Gastrocnemius medialis (tissue), 4 donors: ENCODE measurements at regions of chr20 and their contacts with region 1.

Region 1: DNA sequence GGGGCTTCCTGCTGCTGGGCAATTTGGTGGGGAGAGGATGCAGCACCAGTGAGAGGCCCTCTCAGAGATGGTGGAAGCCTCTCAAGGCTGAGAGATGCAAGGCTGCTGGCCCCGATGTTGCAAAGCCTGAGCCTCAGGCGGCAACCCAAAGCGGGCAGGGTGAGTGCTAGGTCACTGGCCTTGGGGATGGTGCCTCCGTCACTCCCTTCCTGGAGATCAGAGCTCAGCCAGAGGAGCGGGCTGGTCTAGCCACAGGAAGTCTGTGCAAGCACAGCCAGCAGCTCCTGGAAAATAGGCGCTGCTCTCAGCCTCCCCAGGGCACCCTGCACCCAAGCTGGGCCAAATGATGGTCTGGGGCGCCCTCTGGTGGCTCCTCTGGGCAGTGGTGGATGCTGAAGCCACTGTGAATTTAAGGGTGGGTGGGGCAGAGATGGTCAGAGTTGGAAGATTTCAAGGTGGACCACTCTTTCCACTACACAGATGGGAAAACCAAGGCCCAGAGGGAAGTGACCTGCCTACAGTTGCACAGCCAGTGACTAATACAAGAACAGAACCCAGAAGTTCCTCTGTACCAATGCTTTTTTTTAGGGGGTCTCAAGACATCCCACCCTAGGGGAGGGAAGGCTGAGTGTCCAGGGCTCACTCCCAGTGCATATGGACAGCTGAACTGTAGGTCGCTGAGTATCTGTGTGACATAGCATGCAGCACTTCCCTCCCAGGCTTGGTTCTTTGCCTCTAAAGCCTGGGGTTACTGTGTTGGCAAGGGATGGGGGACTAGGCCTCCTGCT is 20.8 kb downstream of the C20orf203 start:
- DNase-seq: peak; percentile 46 to 61
- ATAC-seq: peak; percentile 78 to 82
- H3K4me3 ChIP-seq: no peak overlapping the region
- H3K27ac ChIP-seq: no peak overlapping the region
- H3K4me1 ChIP-seq: no peaks in the 10 kb centered on the region
- H3K27me3 ChIP-seq: no peaks in the 10 kb centered on the region
- CTCF ChIP-seq: peak; percentile 85 to 95 (median 92)
- POLR2A ChIP-seq: no peak

Region 2: DNA sequence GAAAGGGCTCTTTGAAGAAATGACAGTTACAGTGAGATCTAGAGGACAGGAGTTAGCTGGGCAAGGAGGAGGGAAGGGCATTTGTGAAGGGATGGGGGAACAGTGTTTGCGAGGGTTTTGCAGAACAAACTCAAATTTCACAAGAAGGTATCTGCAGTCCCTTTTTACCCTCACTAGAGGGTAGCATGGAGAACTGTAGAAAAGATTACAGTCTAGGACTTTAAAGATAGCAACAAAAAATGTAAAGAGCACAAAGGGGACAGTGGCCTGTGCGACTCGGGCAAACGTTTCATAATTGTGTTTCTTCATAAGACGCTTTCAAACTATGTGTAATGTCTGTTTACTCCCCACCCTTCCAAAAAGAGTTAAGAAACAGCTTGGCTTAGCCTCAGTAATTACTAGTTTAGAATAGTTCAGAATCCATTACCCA is 316.0 kb before region 1 on chr20:
- in situ Hi-C with region 1: no loop called
- intact Hi-C with region 1: loop called (anchors 10 kb)
- DNase-seq: no peak
- ATAC-seq: peak in 1 of 2 donors; percentile 33
- H3K4me3 ChIP-seq: no peak overlapping the region
- H3K27ac ChIP-seq: no peak overlapping the region
- H3K4me1 ChIP-seq: peaks cover 0 to 13% of the 10 kb centered on the region in 2 donors
- H3K27me3 ChIP-seq: no peaks in the 10 kb centered on the region
- CTCF ChIP-seq: peak in 4 of 5 experiments; percentile 12 to 53 (median 39)
- POLR2A ChIP-seq: no peak

Region 3: GRCh38 chr20:32521780-32522525 is 131.0 kb before region 1 on chr20:
- in situ Hi-C with region 1: loop called in 1 of 4 experiments (anchors 5 kb)
- intact Hi-C with region 1: loop called (anchors 1 kb)
- DNase-seq: peak in 1 of 2 donors; percentile 27
- ATAC-seq: peak in 1 of 2 donors; percentile 71
- H3K4me3 ChIP-seq: no peak overlapping the region
- H3K27ac ChIP-seq: no peak overlapping the region
- H3K4me1 ChIP-seq: peaks cover 0 to 3% of the 10 kb centered on the region in 2 donors
- H3K27me3 ChIP-seq: no peaks in the 10 kb centered on the region
- CTCF ChIP-seq: peak; percentile 46 to 85 (median 76)
- POLR2A ChIP-seq: no peak

Region 4: DNA sequence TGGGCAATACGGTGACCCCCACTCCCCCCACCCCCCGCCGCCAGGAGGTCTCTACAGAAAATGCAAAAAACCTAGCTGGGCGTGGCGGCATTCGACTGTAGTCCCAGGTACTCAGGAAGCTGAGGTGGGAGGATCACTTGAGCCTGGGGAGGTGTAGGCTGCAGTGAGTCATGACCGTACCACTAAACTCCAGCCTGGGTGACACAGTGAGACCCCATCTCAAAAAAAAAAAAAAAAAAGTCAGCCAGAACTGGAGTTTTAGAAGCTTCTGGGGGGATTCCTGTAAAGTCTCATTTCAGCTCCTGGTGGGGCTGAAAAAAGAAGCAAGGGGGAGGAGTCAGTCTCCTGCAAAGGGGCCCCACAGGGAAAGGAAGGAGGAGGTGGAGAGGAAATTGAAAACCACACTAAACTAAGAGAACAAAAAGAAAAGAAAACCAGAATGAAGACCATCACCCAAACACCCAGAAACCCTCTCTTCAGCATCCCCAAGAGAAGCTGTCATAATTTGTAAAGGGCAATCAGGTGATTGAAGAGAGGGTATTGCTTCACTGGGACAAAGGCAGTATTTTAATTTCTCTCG is 118.2 kb before region 1 on chr20:
- in situ Hi-C with region 1: loop called in 3 of 4 experiments (anchors 5 kb)
- intact Hi-C with region 1: no loop called
- DNase-seq: no peak
- ATAC-seq: no peak
- H3K4me3 ChIP-seq: no peak overlapping the region
- H3K27ac ChIP-seq: no peak overlapping the region
- H3K4me1 ChIP-seq: no peaks in the 10 kb centered on the region
- H3K27me3 ChIP-seq: no peaks in the 10 kb centered on the region
- CTCF ChIP-seq: no peak
- POLR2A ChIP-seq: no peak

Region 5: GRCh38 chr20:32539817-32540675 is 112.9 kb before region 1 on chr20:
- in situ Hi-C with region 1: loop called in 1 of 4 experiments (anchors 10 kb)
- intact Hi-C with region 1: no loop called
- DNase-seq: no peak
- ATAC-seq: no peak
- H3K4me3 ChIP-seq: no peak overlapping the region
- H3K27ac ChIP-seq: no peak overlapping the region
- H3K4me1 ChIP-seq: no peaks in the 10 kb centered on the region
- H3K27me3 ChIP-seq: no peaks in the 10 kb centered on the region
- CTCF ChIP-seq: no peak
- POLR2A ChIP-seq: no peak

Region 6: GRCh38 chr20:32638848-32639247 is 14.1 kb before region 1 on chr20:
- in situ Hi-C with region 1: no loop called
- intact Hi-C with region 1: no loop called
- DNase-seq: no peak
- ATAC-seq: no peak
- H3K4me3 ChIP-seq: no peak overlapping the region
- H3K27ac ChIP-seq: no peak overlapping the region
- H3K4me1 ChIP-seq: no peaks in the 10 kb centered on the region
- H3K27me3 ChIP-seq: no peaks in the 10 kb centered on the region
- CTCF ChIP-seq: no peak
- POLR2A ChIP-seq: no peak

Region 7: GRCh38 chr20:32762149-32762753 is 109.3 kb after region 1 on chr20 and contains the start of gene DNMT3B:
- in situ Hi-C with region 1: no loop called
- intact Hi-C with region 1: no loop called
- DNase-seq: peak; percentile 38 to 52
- ATAC-seq: peak; percentile 84
- H3K4me3 ChIP-seq: peak within 1 kb of the TSS; percentile 68 to 89 (median 76)
- H3K27ac ChIP-seq: peak within 1 kb of the TSS in 1 of 4 donors; percentile 37
- H3K4me1 ChIP-seq: peaks cover 9% of the 10 kb centered on the region in 2 donors
- H3K27me3 ChIP-seq: no peaks in the 10 kb centered on the region
- CTCF ChIP-seq: peak in 3 of 5 experiments; percentile 6 to 31 (median 21)
- POLR2A ChIP-seq: no peak
- total RNA-seq, gene DNMT3B: 0.20 to 0.39 (median 0.30) TPM